ENCODE measurements at regions of chr22 and their contacts with region 1.

Region 1: GRCh38 chr22:38317122-38317994 is at the start of gene CSNK1E:
- DNase-seq: peak; percentile 76
- H3K4me3 ChIP-seq: peak within 1 kb of the TSS; percentile 79 to 80
- H3K27ac ChIP-seq: peak within 1 kb of the TSS; percentile 99
- H3K4me1 ChIP-seq: peaks cover 27% of the 10 kb centered on the region
- H3K27me3 ChIP-seq: no peaks in the 10 kb centered on the region
- CTCF ChIP-seq: peak in 1 of 4 experiments; percentile 3
- POLR2A ChIP-seq: peak; percentile 67
- total RNA-seq, gene CSNK1E: 82.8 to 190 TPM

Region 2: DNA sequence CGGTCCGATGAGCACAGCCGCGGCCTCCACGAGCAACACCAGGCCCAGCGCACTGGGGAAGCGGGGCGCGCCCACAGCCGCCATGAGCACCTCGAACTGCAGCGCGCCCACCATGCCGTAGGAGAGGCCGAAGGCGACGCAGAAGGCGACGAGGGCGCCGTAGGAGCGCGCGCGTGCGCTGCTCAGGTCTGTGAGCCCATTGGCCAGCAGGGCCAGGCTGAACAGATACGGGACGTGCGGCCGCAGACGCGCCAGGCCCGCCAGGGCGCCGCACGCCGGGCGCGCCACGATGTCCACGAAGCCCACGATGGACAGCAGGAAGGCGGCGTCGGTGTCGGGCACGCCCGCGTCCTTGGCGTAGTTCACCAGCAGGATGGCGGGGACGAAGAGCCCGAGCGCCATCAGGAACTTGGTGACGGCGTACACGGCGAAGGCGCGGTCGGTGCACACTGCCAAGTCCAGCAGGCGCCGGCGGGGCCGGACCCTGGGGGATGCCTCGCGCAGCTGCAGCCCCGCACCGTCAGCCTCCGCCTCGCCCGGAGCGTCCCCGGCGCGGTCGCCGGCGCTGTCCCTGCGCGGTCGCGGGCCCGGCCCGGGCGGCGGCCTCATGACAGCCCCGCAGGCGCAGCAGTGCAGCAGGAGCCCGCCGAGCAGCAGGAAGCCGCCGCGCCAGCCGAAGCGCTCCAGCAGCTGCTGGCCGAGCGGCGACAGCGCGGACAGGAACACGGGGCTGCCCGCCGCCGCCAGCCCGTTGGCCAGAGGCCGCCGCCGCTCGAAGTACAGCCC is 236.3 kb before region 1 on chr22:
- intact Hi-C with region 1: no loop called
- DNase-seq: no peak
- H3K4me3 ChIP-seq: peak overlapping the region; percentile 9 to 21
- H3K27ac ChIP-seq: peak overlapping the region; percentile 50 to 54
- H3K4me1 ChIP-seq: peaks cover 9% of the 10 kb centered on the region
- H3K27me3 ChIP-seq: no peaks in the 10 kb centered on the region
- CTCF ChIP-seq: no peak
- POLR2A ChIP-seq: peak; percentile 20

Region 3: GRCh38 chr22:38272373-38273134 is 44.8 kb before region 1 on chr22 and contains the start of gene TMEM184B:
- intact Hi-C with region 1: loop called (anchors 5 kb)
- DNase-seq: peak; percentile 66
- H3K4me3 ChIP-seq: peak within 1 kb of the TSS; percentile 94 to 98
- H3K27ac ChIP-seq: peak within 1 kb of the TSS; percentile 86 to 91
- H3K4me1 ChIP-seq: peaks cover 6% of the 10 kb centered on the region
- H3K27me3 ChIP-seq: no peaks in the 10 kb centered on the region
- CTCF ChIP-seq: no peak
- POLR2A ChIP-seq: peak; percentile 79
- total RNA-seq, gene TMEM184B: 76.0 to 137 TPM

Measured in prostate gland (tissue), 2 donors.